A673 (cell line): ENCODE measurements at regions of chr1 and their contacts with region 1.

Region 1: GRCh38 chr1:84936116-84936810 is 43.3 kb upstream of the LPAR3 start:
- DNase-seq: peak; percentile 77
- H3K4me3 ChIP-seq: no peak overlapping the region
- H3K27ac ChIP-seq: no peak overlapping the region
- H3K4me1 ChIP-seq: no peaks in the 10 kb centered on the region
- H3K27me3 ChIP-seq: no peaks in the 10 kb centered on the region
- CTCF ChIP-seq: peak; percentile 92

Region 2: GRCh38 chr1:83931658-83932253 is 1004.5 kb before region 1 on chr1:
- CTCF ChIA-PET with region 1: no interaction called
- POLR2A ChIA-PET with region 1: no interaction called
- intact Hi-C with region 1: loop called (anchors 10 kb)
- DNase-seq: peak; percentile 75
- H3K4me3 ChIP-seq: no peak overlapping the region
- H3K27ac ChIP-seq: no peak overlapping the region
- H3K4me1 ChIP-seq: peaks cover 18% of the 10 kb centered on the region
- H3K27me3 ChIP-seq: no peaks in the 10 kb centered on the region
- CTCF ChIP-seq: peak; percentile 79

Region 3: DNA sequence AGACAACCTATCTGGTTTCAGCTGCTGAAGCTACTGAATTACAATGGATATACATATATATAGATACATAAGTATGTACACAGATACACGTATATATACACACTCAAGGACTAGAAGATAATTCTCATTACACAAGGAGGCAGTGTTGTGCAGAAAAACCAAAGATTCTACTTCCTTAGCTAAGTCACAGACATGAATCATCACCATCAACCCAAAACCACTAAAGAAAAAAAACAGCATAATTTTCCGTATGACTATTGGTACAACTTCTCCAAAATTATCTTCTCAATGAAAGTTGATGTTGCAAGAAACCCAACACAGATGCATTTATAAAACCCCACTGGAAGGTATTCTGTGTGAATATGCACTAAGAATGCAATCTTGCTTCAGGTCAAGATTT is 494.0 kb before region 1 on chr1:
- CTCF ChIA-PET with region 1: no interaction called
- POLR2A ChIA-PET with region 1: no interaction called
- intact Hi-C with region 1: loop called (anchors 10 kb)
- DNase-seq: peak; percentile 77
- H3K4me3 ChIP-seq: no peak overlapping the region
- H3K27ac ChIP-seq: no peak overlapping the region
- H3K4me1 ChIP-seq: no peaks in the 10 kb centered on the region
- H3K27me3 ChIP-seq: no peaks in the 10 kb centered on the region
- CTCF ChIP-seq: peak; percentile 63

Region 4: GRCh38 chr1:84541679-84542078 is 394.6 kb before region 1 on chr1:
- CTCF ChIA-PET with region 1: no interaction called
- POLR2A ChIA-PET with region 1: no interaction called
- intact Hi-C with region 1: no loop called
- DNase-seq: no peak
- H3K4me3 ChIP-seq: no peak overlapping the region
- H3K27ac ChIP-seq: no peak overlapping the region
- H3K4me1 ChIP-seq: peaks cover 6% of the 10 kb centered on the region
- H3K27me3 ChIP-seq: no peaks in the 10 kb centered on the region
- CTCF ChIP-seq: peak; percentile 48

Region 5: DNA sequence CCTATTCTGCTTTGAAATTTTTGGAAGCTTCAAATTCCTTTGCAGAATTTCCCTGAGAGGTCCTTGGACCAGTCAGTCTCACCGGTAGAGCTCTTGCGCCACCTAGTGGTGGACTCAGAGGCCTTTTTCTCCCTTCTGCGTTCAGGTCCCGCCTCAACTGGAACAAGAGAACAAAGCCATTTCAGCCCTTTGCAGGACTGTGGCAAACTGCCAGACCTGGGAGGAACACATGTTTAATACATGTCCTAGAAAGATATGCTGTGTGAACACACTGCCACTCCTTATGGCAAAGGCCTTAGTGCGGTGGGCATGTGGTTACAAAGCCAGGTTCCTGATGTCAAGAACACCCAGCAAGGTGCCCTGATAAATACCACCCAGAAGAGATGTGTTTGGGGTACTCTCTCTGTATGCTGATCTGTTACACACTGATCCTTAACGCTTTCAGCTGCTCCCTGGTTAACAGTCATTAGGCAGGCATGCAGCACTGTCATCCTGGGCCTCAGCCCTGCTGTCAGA is 163.8 kb before region 1 on chr1:
- CTCF ChIA-PET with region 1: no interaction called
- POLR2A ChIA-PET with region 1: no interaction called
- intact Hi-C with region 1: loop called (anchors 5 kb)
- DNase-seq: peak; percentile 85
- H3K4me3 ChIP-seq: no peak overlapping the region
- H3K27ac ChIP-seq: no peak overlapping the region
- H3K4me1 ChIP-seq: no peaks in the 10 kb centered on the region
- H3K27me3 ChIP-seq: peaks cover 3% of the 10 kb centered on the region
- CTCF ChIP-seq: peak; percentile 92